H1 (cell line): ENCODE measurements at regions of chr22 and their contacts with region 1.

Region 1: GRCh38 chr22:37316875-37317371 is 34.6 kb downstream of the CYTH4 start:
- DNase-seq: peak; percentile 34 to 85
- H3K4me3 ChIP-seq: no peak overlapping the region
- H3K27ac ChIP-seq: no peak overlapping the region
- H3K4me1 ChIP-seq: peaks cover 0 to 6% (median 0%) of the 10 kb centered on the region in 4 experiments; a peak in 2 of 7 replicates
- H3K27me3 ChIP-seq: no peaks in the 10 kb centered on the region
- CTCF ChIP-seq: peak; percentile 95 to 99 (median 96)
- EP300 ChIP-seq: no peak
- POLR2A ChIP-seq: no peak
- RAD21 ChIP-seq: peak; percentile 98 to 99

Region 2: GRCh38 chr22:37330200-37331033 is 13.5 kb after region 1 on chr22:
- CTCF ChIA-PET with region 1: interaction called, 61 read pairs
- POLR2A ChIA-PET with region 1: interaction called, 3 read pairs
- DNase-seq: peak; percentile 69 to 91
- H3K4me3 ChIP-seq: no peak overlapping the region
- H3K27ac ChIP-seq: no peak overlapping the region
- H3K4me1 ChIP-seq: peaks cover 0 to 15% (median 4%) of the 10 kb centered on the region in 4 experiments; a peak in 5 of 7 replicates
- H3K27me3 ChIP-seq: peaks cover 0 to 27% (median 12%) of the 10 kb centered on the region in 4 experiments; a peak in 5 of 7 replicates
- CTCF ChIP-seq: peak; percentile 44 to 81 (median 73)
- EP300 ChIP-seq: no peak
- POLR2A ChIP-seq: no peak
- RAD21 ChIP-seq: peak; percentile 13 to 21; a peak in 1 of 4 replicates

Region 3: DNA sequence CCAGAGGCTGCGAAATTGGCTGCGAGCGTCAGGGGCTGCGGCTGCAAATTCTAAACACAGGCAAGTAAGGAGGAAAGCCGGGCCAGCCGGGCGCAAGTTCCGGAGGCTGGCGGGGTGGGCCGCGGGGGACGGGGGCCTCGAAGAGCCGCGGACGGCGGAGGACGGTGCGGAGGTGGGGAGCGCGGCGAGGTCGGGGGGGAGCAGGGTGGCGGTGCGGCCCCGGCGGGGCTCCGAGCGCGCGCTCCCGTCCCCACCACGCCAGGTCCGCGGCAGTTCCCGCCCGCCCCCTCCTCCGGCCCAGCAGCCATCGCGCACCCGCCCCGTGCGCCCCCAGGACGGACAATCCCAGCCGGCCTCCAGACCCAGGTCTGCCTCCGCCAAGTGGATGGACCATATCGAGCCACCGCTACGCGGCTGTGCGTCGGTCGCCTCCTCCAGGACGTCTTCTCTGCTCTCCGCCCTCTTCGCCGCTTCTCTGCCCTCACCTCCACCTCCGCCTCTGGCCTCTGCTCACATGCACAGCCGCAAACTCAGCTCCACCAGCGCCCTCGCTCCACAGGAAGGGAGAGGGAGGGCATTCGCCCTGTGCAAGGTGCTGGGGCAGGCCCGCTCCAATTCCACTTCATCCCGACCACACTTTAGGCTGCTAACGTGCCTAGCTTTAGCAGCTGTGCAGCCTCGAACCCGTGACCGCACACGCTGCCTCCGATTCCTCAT is 103.2 kb after region 1 on chr22:
- CTCF ChIA-PET with region 1: interaction called, 19 read pairs
- POLR2A ChIA-PET with region 1: no interaction called
- DNase-seq: peak; percentile 50 to 80
- H3K4me3 ChIP-seq: peak overlapping the region; percentile 41 to 65 (median 51)
- H3K27ac ChIP-seq: no peak overlapping the region
- H3K4me1 ChIP-seq: peaks cover 3 to 28% (median 20%) of the 10 kb centered on the region in 4 experiments
- H3K27me3 ChIP-seq: peaks cover 0 to 37% (median 28%) of the 10 kb centered on the region in 4 experiments; a peak in 6 of 7 replicates
- CTCF ChIP-seq: peak in 2 of 3 experiments; percentile 2 to 29; a peak in 1 of 4 replicates
- EP300 ChIP-seq: no peak
- POLR2A ChIP-seq: no peak
- RAD21 ChIP-seq: peak in 1 of 2 experiments; percentile 6; a peak in 1 of 4 replicates

Region 4: DNA sequence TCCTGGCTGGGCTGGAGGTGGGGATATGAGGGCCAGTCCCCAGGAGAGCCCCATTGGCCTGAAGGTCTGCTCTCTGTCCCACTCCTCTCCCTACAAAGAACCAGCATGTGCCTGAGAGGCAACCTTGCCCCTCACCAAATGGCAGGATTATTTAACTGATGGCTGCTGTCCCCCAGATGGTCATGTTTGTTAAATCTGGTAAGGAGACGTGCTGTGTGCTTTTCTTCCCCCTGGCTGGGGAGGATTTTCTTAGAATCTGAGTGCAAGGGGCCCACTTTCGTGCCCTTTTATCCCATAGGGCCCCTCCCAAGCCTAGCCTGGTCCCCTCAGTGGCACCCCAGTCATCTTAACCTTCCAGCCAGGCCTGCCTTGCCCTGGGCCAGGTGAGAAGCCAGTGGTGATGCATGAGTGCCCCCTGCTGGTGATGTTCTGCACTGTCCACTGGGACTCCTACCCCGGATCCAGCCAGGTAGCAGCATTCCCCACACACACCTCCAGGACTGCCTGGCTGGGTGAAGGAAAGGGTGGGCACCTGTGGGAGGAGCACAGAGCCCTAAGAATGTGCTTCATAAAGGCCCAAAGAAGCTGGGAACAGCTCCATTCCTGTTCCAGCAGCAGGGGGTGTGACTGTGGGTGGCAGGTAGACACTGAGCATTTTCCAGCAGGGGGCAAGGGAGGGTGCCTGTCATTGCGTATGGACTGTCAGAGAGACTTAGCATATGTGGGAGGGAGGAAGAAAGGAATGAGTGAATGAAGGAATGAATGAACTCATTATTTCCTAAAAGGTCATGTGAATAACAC is 140.4 kb after region 1 on chr22:
- CTCF ChIA-PET with region 1: interaction called, 119 read pairs
- POLR2A ChIA-PET with region 1: no interaction called
- DNase-seq: peak; percentile 56 to 97
- H3K4me3 ChIP-seq: no peak overlapping the region
- H3K27ac ChIP-seq: no peak overlapping the region
- H3K4me1 ChIP-seq: no peaks in the 10 kb centered on the region; a peak in 2 of 7 replicates
- H3K27me3 ChIP-seq: no peaks in the 10 kb centered on the region
- CTCF ChIP-seq: peak; percentile 97 to 99 (median 99)
- EP300 ChIP-seq: no peak
- POLR2A ChIP-seq: no peak
- RAD21 ChIP-seq: peak; percentile 98 to 100

Region 5: GRCh38 chr22:37486224-37486845 is 169.4 kb after region 1 on chr22 and contains the start of gene MFNG:
- CTCF ChIA-PET with region 1: interaction called, 11 read pairs
- POLR2A ChIA-PET with region 1: no interaction called
- DNase-seq: peak in 1 of 2 experiments; percentile 83
- H3K4me3 ChIP-seq: peak within 1 kb of the TSS in 2 of 4 experiments; percentile 23 to 40; a peak in 3 of 8 replicates
- H3K27ac ChIP-seq: no peak within 1 kb of the TSS
- H3K4me1 ChIP-seq: peaks cover 0 to 32% (median 21%) of the 10 kb centered on the region in 4 experiments; a peak in 6 of 7 replicates
- H3K27me3 ChIP-seq: peaks cover 0 to 4% (median 0%) of the 10 kb centered on the region in 4 experiments; a peak in 1 of 7 replicates
- CTCF ChIP-seq: peak in 1 of 3 experiments; percentile 32; a peak in 1 of 4 replicates
- EP300 ChIP-seq: no peak
- POLR2A ChIP-seq: no peak
- RAD21 ChIP-seq: no peak
- total RNA-seq, gene MFNG: 1.7 and 1.8 TPM in 2 replicates